ENCODE measurements at regions of chr4 and their contacts with region 1.

Region 1: GRCh38 chr4:80138551-80139538 is 58.5 kb upstream of the PRDM8 start:
- DNase-seq: no peak
- ATAC-seq: peak; percentile 72
- H3K4me3 Mint-ChIP-seq: peak overlapping the region; percentile 21
- H3K27ac Mint-ChIP-seq: peak overlapping the region; percentile 46
- H3K4me1 Mint-ChIP-seq: peaks cover 33% of the 10 kb centered on the region
- H3K27me3 Mint-ChIP-seq: no peaks in the 10 kb centered on the region
- CTCF ChIP-seq: no peak

Region 2: DNA sequence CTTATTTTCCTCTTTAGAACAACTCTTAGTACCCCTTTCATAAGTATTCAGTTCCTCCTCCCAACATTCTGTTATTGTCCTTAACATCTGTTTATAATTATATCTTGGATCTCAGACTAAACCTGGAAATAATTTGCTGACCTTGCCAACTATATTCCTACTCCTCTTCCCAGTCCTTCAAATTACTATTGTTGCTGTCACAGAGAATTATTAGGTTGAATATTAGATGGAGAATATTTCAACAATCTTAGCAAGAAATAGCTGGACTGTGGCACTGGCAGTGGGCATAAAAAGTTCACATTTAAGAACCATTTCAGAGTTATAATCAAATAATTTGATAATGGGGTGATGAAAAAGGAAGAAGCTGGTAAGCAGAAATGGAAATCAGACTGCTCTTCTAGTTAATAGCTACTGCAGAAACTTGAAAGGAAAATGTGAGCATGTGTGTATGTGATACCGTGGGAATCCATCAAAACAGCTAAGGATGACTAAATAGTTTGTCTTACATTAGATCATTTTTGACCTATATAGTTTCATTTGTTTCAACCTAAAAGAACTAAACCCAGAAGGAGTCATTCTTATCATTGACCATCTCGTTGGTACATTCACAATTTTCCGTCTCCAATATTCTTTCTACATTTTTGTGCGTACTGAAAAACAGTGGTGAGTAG is 15.2 kb after region 1 on chr4:
- CTCF ChIA-PET with region 1: no interaction called
- POLR2A ChIA-PET with region 1: interaction called, 3 read pairs
- intact Hi-C with region 1: loop called (anchors 1 kb)
- DNase-seq: no peak
- ATAC-seq: no peak
- H3K4me3 Mint-ChIP-seq: no peak overlapping the region
- H3K27ac Mint-ChIP-seq: no peak overlapping the region
- H3K4me1 Mint-ChIP-seq: no peaks in the 10 kb centered on the region
- H3K27me3 Mint-ChIP-seq: no peaks in the 10 kb centered on the region
- CTCF ChIP-seq: no peak

Region 3: GRCh38 chr4:80279751-80280150 is 140.9 kb after region 1 on chr4:
- CTCF ChIA-PET with region 1: no interaction called
- POLR2A ChIA-PET with region 1: no interaction called
- intact Hi-C with region 1: no loop called
- DNase-seq: no peak
- ATAC-seq: no peak
- H3K4me3 Mint-ChIP-seq: no peak overlapping the region
- H3K27ac Mint-ChIP-seq: no peak overlapping the region
- H3K4me1 Mint-ChIP-seq: no peaks in the 10 kb centered on the region
- H3K27me3 Mint-ChIP-seq: peaks cover 8% of the 10 kb centered on the region
- CTCF ChIP-seq: no peak